OCI-LY7 (cell line): ENCODE measurements at regions of chr1 and their contacts with region 1.

Region 1: GRCh38 chr1:70499695-70500094 is 88.6 kb downstream of the CTH start:
- DNase-seq: no peak
- H3K4me3 ChIP-seq: no peak overlapping the region
- H3K27ac ChIP-seq: no peak overlapping the region
- H3K4me1 ChIP-seq: no peaks in the 10 kb centered on the region
- CTCF ChIP-seq: no peak

Region 2: GRCh38 chr1:70277875-70278274 is 221.8 kb before region 1 on chr1:
- CTCF ChIA-PET with region 1: no interaction called
- POLR2A ChIA-PET with region 1: no interaction called
- intact Hi-C with region 1: loop called (anchors 10 kb)
- DNase-seq: peak; percentile 25
- H3K4me3 ChIP-seq: no peak overlapping the region
- H3K27ac ChIP-seq: no peak overlapping the region
- H3K4me1 ChIP-seq: peaks cover 11% of the 10 kb centered on the region
- CTCF ChIP-seq: no peak

Region 3: DNA sequence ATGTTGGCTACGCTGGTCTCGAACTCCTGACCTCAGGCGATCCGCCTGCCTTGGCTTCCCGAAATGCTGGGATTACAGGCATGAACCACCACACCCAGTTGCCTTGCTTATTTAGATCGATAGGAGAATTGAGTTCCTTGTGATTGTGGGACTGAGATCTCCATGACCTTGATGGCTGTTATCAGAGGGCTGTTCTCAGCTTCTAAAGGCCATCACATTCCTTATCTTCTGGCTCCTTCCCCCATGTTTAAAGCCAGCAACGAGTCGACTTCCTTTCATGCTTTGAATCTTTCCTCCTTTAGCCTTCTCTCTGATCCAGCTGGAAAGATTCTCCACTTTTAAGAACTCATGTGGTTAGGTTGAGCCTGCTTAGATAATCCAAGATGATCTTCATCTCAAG is 50.6 kb before region 1 on chr1:
- CTCF ChIA-PET with region 1: no interaction called
- POLR2A ChIA-PET with region 1: no interaction called
- intact Hi-C with region 1: no loop called
- DNase-seq: no peak
- H3K4me3 ChIP-seq: no peak overlapping the region
- H3K27ac ChIP-seq: no peak overlapping the region
- H3K4me1 ChIP-seq: no peaks in the 10 kb centered on the region
- CTCF ChIP-seq: no peak

Region 4: DNA sequence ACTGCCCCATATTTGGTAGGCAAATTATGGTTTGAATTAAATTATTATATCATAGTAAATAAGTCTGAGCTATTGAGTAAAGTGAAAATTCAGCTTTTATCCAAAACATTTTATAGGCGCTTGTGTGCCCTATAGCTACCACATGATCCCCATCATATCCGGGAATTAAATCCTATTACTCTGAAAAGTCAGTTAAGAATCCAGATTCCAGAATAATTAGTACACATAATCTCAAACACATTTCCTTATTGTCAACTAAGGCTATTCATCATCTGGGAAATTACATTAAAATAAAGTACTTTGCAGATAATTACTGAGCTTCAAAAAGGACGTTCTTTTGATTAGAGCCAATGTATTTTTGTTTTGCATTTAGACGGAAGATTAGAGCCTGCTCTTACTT is 16.4 kb before region 1 on chr1:
- CTCF ChIA-PET with region 1: no interaction called
- POLR2A ChIA-PET with region 1: no interaction called
- intact Hi-C with region 1: no loop called
- DNase-seq: no peak
- H3K4me3 ChIP-seq: no peak overlapping the region
- H3K27ac ChIP-seq: no peak overlapping the region
- H3K4me1 ChIP-seq: no peaks in the 10 kb centered on the region
- CTCF ChIP-seq: no peak

Region 5: DNA sequence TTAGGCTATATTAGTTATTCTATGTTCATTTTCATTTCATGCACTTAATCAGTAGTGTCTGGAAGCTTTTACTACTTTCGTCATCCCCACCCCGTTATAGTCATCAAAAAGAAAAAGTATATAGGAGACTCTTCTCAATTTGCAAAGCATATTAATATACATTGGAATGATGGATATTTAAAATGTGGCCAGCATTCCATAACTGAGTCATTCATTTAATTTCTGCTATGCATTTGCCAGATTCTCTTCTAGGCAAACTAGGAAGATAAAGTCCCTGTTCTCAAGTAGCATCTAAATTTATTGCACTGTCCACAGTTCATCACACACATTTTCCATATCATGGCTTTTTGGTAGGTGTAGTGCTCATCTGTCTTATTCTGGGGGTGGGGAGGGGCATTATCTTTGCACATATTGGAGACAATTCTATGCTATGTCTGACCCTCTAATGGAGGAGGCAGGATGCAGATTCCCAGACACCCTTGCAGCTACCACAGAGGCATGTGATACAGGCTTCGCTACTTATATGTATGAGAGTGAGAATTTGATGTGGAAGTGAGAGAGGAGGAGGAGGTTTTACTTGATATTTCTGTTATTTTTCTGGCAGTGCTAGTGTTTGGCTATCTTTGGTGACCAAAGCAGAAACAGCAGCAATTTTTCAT is 37.1 kb after region 1 on chr1:
- CTCF ChIA-PET with region 1: no interaction called
- POLR2A ChIA-PET with region 1: no interaction called
- intact Hi-C with region 1: no loop called
- DNase-seq: no peak
- H3K4me3 ChIP-seq: no peak overlapping the region
- H3K27ac ChIP-seq: no peak overlapping the region
- H3K4me1 ChIP-seq: no peaks in the 10 kb centered on the region
- CTCF ChIP-seq: no peak